BJ (cell line): ENCODE measurements at regions of chr9 and their contacts with region 1.

Region 1: GRCh38 chr9:108883085-108883484 is 21.0 kb downstream of the ACTL7A start:
- DNase-seq: no peak
- H3K4me3 ChIP-seq: no peak overlapping the region
- H3K27me3 ChIP-seq: no peaks in the 10 kb centered on the region
- CTCF ChIP-seq: no peak

Region 2: GRCh38 chr9:108904161-108904560 is 21.1 kb after region 1 on chr9:
- CTCF ChIA-PET with region 1: interaction called, 3 read pairs
- POLR2A ChIA-PET with region 1: interaction called, 10 read pairs
- DNase-seq: no peak
- H3K4me3 ChIP-seq: no peak overlapping the region
- H3K27me3 ChIP-seq: no peaks in the 10 kb centered on the region
- CTCF ChIP-seq: no peak